Left colon (tissue), 2 donors: ENCODE measurements at regions of chr6 and their contacts with region 1.

Region 1: GRCh38 chr6:110949679-110950285 is 8.7 kb upstream of the GTF3C6 start:
- DNase-seq: no peak
- ATAC-seq: no peak

Region 2: DNA sequence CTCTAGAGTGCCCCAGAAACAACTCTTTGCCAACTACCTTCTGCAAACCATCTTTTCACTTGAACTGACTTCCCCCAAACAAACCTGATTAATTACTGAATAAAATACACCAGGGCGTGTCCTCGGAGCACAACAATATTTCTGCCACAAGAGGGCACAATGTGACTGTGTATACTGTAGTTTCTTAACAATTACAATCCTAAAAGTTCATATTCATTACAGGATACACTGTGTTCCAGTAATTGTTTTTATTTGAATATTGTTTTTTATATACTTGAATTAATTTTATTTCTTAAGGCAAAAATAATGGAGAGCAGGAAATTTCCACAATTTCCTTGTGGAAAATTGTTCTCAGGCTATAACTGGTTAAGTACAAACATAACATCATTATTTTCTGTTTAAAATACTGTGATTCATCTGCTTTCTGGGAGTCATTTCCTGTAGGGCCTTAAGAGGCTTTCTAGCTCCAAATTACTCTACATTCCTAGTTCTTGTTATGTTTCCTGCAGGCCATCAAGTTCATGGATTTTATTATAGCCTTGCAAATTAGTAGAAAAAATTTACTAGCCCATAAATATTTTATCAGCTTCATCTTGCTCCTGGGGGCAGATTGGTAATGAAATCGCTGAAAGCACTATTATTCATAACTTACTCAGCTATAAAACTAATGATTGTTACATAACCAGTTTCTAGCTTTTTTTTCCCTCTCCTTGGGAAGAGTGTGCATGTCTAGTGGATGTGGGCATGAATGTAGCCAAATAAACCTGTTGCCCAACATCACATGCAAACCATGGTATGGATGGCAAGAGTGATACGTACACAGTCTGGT is 421.5 kb before region 1 on chr6:
- intact Hi-C with region 1: loop called in 1 of 2 experiments (anchors 5 kb)
- DNase-seq: peak in 1 of 2 donors; percentile 39
- ATAC-seq: peak; percentile 76

Region 3: GRCh38 chr6:110682460-110682853 is 267.3 kb before region 1 on chr6:
- intact Hi-C with region 1: loop called in 1 of 2 experiments (anchors 2 kb)
- DNase-seq: peak; percentile 63 to 69
- ATAC-seq: peak; percentile 97